Activated CD4-positive, alpha-beta T cell treated with anti-CD3 and anti-CD28 coated beads, Interleukin-2, amount 10 ng/mL, durations not matched to agents 24 days and 14 days (primary cell): ENCODE measurements at regions of chr5 and their contacts with region 1.

Region 1: DNA sequence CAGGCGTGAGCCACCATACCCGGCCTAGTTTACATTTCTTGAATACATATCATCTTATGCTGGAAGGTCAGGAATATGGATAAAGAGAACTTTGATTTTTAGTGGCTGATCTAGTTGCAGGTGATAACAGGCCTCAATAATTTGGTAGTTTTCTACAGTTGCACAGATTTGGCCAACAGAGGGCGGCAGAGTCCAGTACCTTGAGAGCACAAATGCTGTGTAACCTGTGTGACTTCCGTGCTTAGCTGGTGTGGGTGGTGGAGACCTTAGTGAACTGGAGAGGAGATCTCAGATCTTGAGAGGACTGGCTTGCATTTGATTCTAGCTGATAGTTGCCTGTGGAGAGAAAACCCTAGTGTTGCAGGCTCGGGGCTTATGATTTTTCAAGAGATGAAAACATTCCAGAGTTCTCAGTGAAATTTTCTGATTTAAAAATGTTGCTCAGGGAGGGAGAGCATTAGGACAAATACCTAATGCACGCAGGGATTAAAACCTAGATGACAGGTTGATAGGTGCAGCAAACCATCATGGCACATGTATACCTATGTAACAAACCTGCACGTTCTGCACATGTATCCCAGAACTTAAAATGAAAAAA is 17.4 kb upstream of the GPR151 start:
- DNase-seq: peak; percentile 92
- H3K4me3 Mint-ChIP-seq: no peak overlapping the region
- H3K27ac Mint-ChIP-seq: no peak overlapping the region
- H3K4me1 Mint-ChIP-seq: peaks cover 4% of the 10 kb centered on the region
- H3K27me3 Mint-ChIP-seq: peaks cover 2% of the 10 kb centered on the region

Region 2: GRCh38 chr5:146633323-146633764 is 100.0 kb after region 1 on chr5:
- intact Hi-C with region 1: no loop called
- DNase-seq: no peak
- H3K4me3 Mint-ChIP-seq: no peak overlapping the region
- H3K27ac Mint-ChIP-seq: no peak overlapping the region
- H3K4me1 Mint-ChIP-seq: no peaks in the 10 kb centered on the region
- H3K27me3 Mint-ChIP-seq: peaks cover 5% of the 10 kb centered on the region

Region 3: DNA sequence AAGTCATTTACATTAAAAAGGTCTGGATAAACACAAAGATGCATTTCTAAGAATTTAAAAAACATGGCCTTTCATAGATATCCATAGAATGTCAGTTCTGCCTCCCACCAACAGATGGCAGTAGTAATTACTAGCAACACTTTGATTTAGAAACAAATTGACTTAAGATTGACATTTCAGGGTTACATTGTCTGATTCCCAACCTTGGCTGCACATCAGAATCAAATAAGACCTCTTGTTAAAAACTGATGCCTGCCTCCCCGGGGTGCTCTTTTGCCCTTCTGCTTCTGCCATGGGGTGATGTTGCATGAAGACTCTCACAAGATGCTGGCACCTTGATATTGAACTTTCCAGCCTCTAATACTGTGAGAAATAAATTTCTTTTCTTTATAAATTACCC is 128.9 kb after region 1 on chr5:
- intact Hi-C with region 1: loop called (anchors 10 kb)
- DNase-seq: peak; percentile 78
- H3K4me3 Mint-ChIP-seq: no peak overlapping the region
- H3K27ac Mint-ChIP-seq: no peak overlapping the region
- H3K4me1 Mint-ChIP-seq: no peaks in the 10 kb centered on the region
- H3K27me3 Mint-ChIP-seq: no peaks in the 10 kb centered on the region

Region 4: DNA sequence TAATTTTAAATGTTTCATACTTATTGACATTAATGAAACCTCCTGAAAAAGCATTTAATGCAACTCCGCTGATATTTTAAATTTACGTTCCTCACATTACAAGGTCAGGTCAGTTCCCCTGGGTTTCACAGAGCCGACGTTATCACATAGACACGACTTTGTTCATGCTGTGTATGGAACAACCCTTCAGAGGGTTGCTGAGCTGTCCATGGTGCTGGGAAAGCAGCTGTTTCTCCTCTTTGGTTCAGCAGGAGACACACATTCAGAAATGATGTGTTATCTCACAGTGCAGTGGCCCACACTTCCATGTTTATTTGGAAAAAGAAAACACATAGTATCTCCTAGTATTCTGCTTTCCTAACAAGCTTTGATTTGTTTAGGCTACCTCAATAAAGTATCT is 291.7 kb after region 1 on chr5:
- intact Hi-C with region 1: no loop called
- DNase-seq: peak; percentile 65
- H3K4me3 Mint-ChIP-seq: no peak overlapping the region
- H3K27ac Mint-ChIP-seq: no peak overlapping the region
- H3K4me1 Mint-ChIP-seq: no peaks in the 10 kb centered on the region
- H3K27me3 Mint-ChIP-seq: no peaks in the 10 kb centered on the region

Region 5: GRCh38 chr5:146965761-146966659 is 432.7 kb after region 1 on chr5:
- intact Hi-C with region 1: loop called (anchors 1 kb)
- DNase-seq: peak; percentile 86
- H3K4me3 Mint-ChIP-seq: no peak overlapping the region
- H3K27ac Mint-ChIP-seq: no peak overlapping the region
- H3K4me1 Mint-ChIP-seq: no peaks in the 10 kb centered on the region
- H3K27me3 Mint-ChIP-seq: no peaks in the 10 kb centered on the region

Region 6: DNA sequence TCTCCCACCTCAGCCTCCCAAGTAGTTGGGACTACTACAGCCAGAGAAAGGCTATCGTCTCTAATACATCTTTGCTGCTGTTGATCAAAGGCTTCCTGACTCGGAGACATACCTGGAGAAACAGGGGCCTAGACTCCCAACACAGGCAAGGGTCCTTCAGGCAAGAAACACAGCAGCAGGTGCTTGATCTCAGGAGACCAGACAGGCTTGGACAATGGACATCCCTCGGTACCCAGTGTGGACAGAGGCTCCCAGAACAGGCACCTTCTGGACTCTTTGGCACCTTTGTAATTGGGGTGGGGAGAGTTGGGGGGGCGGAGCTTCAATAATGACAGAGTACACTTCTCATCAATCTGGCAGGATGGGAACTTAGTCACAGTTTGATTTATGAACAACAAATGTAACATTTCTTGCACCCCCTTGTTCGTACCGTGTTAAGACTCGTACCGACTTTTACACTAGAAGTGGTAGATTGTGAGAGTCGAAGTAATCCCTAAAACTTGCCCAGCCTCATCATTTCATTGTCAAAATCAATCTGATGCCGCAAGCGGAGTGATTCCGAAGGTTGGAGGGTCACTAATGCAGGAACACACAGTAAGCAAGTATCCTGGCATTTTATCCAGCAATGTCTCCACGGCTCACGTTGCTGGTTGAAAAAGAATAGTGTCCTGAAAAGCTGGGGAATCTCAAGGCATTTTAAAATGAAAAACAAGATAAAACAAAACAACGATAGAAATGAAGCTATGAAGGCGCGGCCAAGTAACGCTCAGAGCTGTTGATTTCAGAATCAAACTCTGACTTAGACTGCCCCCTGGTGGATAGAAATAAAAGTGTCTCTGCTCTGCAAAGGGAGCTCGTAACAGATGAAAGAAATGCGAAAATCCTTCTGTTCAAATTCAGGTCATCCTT is 655.1 kb after region 1 on chr5:
- intact Hi-C with region 1: loop called (anchors 2 kb)
- DNase-seq: peak; percentile 85
- H3K4me3 Mint-ChIP-seq: no peak overlapping the region
- H3K27ac Mint-ChIP-seq: no peak overlapping the region
- H3K4me1 Mint-ChIP-seq: peaks cover 4% of the 10 kb centered on the region
- H3K27me3 Mint-ChIP-seq: peaks cover 1% of the 10 kb centered on the region